ENCODE measurements at regions of chr6 and their contacts with region 1.

Region 1: GRCh38 chr6:1739680-1740079 is 130.0 kb downstream of the FOXC1 start:
- DNase-seq: peak; percentile 84
- H3K4me3 ChIP-seq: peak overlapping the region; percentile 40
- H3K27ac ChIP-seq: peak overlapping the region; percentile 48
- H3K4me1 ChIP-seq: peaks cover 61% of the 10 kb centered on the region
- CTCF ChIP-seq: no peak

Region 2: DNA sequence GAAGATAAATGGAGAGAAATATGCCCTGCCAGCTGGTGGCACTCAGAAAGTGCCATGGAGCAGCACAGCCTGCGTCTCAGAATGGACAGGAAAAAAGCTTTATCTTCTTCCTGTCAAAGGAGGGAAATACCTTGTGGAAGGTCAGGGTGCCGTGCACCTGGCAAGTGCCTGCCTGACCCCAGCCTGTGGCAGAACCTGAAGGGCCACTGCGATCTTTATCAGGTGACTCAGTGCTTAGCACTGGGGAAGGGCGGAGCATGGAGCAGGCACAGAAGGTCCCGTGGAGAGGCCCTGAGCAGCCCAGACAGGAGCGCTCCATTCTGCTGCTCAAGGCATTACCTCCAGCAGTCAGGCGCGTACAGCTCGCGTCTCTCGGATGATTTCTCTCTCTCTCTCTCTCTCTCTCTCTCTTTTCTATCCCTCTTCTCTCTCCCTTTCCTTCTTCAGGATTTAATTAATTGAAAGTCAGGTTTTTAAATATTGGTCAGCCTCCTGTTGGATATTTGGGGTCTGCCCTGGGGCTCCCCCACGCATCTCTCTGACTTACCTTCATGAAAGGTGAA is 98.3 kb before region 1 on chr6:
- CTCF ChIA-PET with region 1: no interaction called
- POLR2A ChIA-PET with region 1: no interaction called
- intact Hi-C with region 1: no loop called
- DNase-seq: no peak
- H3K4me3 ChIP-seq: no peak overlapping the region
- H3K27ac ChIP-seq: no peak overlapping the region
- H3K4me1 ChIP-seq: no peaks in the 10 kb centered on the region
- CTCF ChIP-seq: no peak

Region 3: DNA sequence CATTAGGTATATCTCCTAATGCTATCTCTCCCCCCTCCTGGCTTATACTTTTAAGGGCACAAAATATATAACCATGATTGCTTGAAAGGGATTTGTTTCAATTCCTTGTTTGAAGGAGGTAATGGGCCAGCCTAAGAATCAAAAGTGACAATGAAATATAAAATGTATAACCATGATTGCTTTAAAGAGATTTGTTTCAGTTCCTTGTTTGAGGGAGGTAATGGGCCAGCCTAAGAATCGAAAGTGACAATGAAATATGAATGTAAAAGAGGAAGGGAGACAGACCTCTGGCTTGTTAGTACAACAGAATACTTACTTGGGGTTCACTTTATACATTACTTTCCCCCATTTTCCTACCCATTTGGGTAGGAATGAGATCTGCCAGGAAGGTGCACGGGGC is 74.5 kb before region 1 on chr6:
- CTCF ChIA-PET with region 1: no interaction called
- POLR2A ChIA-PET with region 1: no interaction called
- intact Hi-C with region 1: loop called (anchors 2 kb)
- DNase-seq: peak; percentile 72
- H3K4me3 ChIP-seq: no peak overlapping the region
- H3K27ac ChIP-seq: no peak overlapping the region
- H3K4me1 ChIP-seq: peaks cover 16% of the 10 kb centered on the region
- CTCF ChIP-seq: no peak

Region 4: DNA sequence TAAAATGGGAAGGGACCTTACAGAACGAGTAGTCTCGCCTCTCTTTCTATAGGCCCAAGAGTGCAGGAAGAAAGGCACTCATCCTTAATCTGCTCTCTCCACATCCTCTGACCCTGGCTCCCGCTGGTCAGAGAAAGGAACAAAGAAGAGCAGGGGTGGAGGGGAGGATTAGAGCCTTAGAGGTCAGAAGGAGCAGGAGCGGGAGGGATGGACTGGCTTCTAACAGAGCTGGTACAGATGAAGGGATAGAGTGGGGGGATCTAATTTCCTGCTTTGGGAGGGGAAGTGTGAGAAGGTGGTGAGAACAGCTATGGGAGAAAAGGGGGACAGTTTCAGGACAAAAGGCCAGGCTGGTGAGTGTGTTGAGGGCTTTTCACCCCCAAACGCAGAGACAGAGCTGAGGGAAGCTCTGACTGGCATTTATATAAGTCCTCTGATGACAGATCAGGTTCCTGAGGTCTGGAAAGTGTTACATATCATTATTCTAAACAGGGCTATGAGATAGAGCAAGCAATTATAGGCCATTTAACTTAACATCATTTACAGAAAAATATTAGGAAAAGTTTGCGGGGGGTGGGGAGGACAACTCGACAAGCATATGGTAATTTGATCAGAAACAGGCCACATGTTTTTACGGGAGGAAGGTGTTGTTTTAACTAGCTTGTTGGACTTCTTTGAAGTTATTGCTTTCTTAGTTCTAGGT is 18.9 kb before region 1 on chr6:
- CTCF ChIA-PET with region 1: no interaction called
- POLR2A ChIA-PET with region 1: no interaction called
- intact Hi-C with region 1: no loop called
- DNase-seq: no peak
- H3K4me3 ChIP-seq: no peak overlapping the region
- H3K27ac ChIP-seq: no peak overlapping the region
- H3K4me1 ChIP-seq: no peaks in the 10 kb centered on the region
- CTCF ChIP-seq: no peak

Measured in OCI-LY7 (cell line).